Aorta (tissue), 5 donors: ENCODE measurements at regions of chr3 and their contacts with region 1.

Region 1: DNA sequence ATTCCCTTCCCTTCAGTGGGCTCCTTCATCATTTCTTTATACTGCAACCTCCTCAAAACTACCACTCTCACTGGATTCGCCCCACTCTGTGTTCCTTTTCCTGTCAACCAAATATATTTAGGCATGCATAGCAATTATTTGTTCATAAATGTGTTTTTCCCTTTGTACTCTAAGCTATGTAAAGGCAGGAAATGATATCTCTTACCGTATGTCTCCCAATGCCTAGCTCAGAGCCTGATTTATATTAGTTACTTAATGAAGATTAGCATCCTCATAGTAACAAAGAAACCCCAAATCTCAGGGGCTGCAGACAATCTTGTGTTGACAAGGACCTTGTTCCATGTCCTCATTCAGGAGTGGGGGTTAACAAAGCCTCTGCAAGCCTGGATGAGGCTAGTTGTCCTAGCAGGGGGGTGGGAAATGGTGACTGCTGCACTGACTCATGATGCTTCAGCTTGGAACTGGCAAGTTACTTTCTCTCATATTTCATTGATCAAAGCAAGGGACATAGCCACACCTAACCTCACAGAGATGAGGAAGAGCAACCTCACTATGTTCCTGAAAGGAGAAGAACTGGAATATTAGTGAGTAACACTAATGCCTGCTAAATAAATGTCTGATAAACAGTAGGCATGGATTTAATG is 15.2 kb downstream of the PHLDB2 start:
- DNase-seq: no peak
- ATAC-seq: no peak
- H3K4me3 ChIP-seq: no peak overlapping the region
- H3K27ac ChIP-seq: peak overlapping the region in 1 of 2 donors; percentile 28
- H3K4me1 ChIP-seq: peaks cover 7 to 8% of the 10 kb centered on the region in 2 donors
- H3K27me3 ChIP-seq: no peaks in the 10 kb centered on the region

Region 2: DNA sequence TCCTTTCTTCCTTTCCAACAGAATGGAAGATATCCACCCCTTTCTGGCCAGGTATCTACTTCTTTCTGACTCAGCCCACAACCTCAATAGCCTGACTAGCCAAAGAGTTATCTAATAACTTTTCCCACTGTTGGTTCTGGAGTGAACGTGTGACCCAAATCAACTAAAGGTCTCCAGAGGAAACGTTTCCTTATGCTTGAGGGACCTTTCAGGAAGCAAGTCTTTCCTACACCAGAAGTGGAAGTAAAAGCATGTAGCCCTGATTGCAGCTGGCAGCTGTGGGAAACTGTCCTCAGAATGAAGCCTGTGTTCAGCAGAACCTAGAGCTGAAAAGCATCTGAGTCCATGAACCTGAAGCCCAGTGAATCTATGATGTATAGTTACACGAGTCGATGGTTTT is 49.9 kb before region 1 on chr3:
- intact Hi-C with region 1: no loop called
- DNase-seq: no peak
- ATAC-seq: no peak
- H3K4me3 ChIP-seq: no peak overlapping the region
- H3K27ac ChIP-seq: no peak overlapping the region
- H3K4me1 ChIP-seq: peaks cover 0 to 3% of the 10 kb centered on the region in 2 donors
- H3K27me3 ChIP-seq: no peaks in the 10 kb centered on the region

Region 3: GRCh38 chr3:111910806-111911205 is 36.5 kb after region 1 on chr3:
- intact Hi-C with region 1: loop called in 1 of 2 experiments (anchors 5 kb)
- DNase-seq: no peak
- ATAC-seq: peak; percentile 36
- H3K4me3 ChIP-seq: peak overlapping the region in 1 of 2 donors; percentile 10
- H3K27ac ChIP-seq: no peak overlapping the region
- H3K4me1 ChIP-seq: peaks cover 7 to 9% of the 10 kb centered on the region in 2 donors
- H3K27me3 ChIP-seq: no peaks in the 10 kb centered on the region